Activated CD4-positive, alpha-beta memory T cell treated with anti-CD3 and anti-CD28 coated beads for 36 hours (primary cell): ENCODE measurements at regions of chr15 and their contacts with region 1.

Region 1: DNA sequence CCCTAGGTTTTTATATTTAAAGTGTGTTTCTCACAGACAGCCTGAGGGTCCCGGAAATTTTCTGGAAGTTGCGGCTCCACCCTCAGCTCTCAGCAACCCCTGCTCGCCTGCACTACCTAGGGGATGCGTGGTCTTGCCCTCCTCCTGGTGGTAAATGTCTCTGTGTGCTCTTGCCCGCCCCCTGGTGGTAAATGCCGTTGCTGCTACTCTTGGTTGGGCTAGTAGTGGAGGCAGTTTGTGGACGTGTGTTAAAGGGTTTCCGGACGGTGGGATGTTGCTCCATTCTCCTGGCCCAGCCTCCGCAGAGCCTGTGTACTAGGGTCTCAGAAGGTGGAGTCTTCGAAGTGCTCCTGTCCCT is 27.4 kb downstream of the STOML1 start:
- DNase-seq: peak; percentile 93
- H3K4me3 Mint-ChIP-seq: peak overlapping the region; percentile 69
- H3K27ac Mint-ChIP-seq: peak overlapping the region; percentile 85
- H3K4me1 Mint-ChIP-seq: peaks cover 27% of the 10 kb centered on the region
- H3K27me3 Mint-ChIP-seq: no peaks in the 10 kb centered on the region

Region 2: GRCh38 chr15:73897441-73898261 is 67.1 kb before region 1 on chr15:
- CTCF ChIA-PET with region 1: interaction called, 23 read pairs
- POLR2A ChIA-PET with region 1: no interaction called
- intact Hi-C with region 1: loop called (anchors 1 kb)
- DNase-seq: peak; percentile 82
- H3K4me3 Mint-ChIP-seq: no peak overlapping the region
- H3K27ac Mint-ChIP-seq: no peak overlapping the region
- H3K4me1 Mint-ChIP-seq: no peaks in the 10 kb centered on the region
- H3K27me3 Mint-ChIP-seq: no peaks in the 10 kb centered on the region

Region 3: GRCh38 chr15:73922186-73923151 is 42.2 kb before region 1 on chr15:
- CTCF ChIA-PET with region 1: interaction called, 22 read pairs
- POLR2A ChIA-PET with region 1: interaction called, 4 read pairs
- intact Hi-C with region 1: loop called (anchors 2 kb)
- DNase-seq: no peak
- H3K4me3 Mint-ChIP-seq: no peak overlapping the region
- H3K27ac Mint-ChIP-seq: peak overlapping the region; percentile 81
- H3K4me1 Mint-ChIP-seq: peaks cover 53% of the 10 kb centered on the region
- H3K27me3 Mint-ChIP-seq: no peaks in the 10 kb centered on the region

Region 4: GRCh38 chr15:73950831-73951561 is 13.7 kb before region 1 on chr15:
- CTCF ChIA-PET with region 1: interaction called, 19 read pairs
- POLR2A ChIA-PET with region 1: no interaction called
- intact Hi-C with region 1: loop called (anchors 1 kb)
- DNase-seq: peak; percentile 81
- H3K4me3 Mint-ChIP-seq: no peak overlapping the region
- H3K27ac Mint-ChIP-seq: peak overlapping the region; percentile 52
- H3K4me1 Mint-ChIP-seq: peaks cover 6% of the 10 kb centered on the region
- H3K27me3 Mint-ChIP-seq: no peaks in the 10 kb centered on the region

Region 5: DNA sequence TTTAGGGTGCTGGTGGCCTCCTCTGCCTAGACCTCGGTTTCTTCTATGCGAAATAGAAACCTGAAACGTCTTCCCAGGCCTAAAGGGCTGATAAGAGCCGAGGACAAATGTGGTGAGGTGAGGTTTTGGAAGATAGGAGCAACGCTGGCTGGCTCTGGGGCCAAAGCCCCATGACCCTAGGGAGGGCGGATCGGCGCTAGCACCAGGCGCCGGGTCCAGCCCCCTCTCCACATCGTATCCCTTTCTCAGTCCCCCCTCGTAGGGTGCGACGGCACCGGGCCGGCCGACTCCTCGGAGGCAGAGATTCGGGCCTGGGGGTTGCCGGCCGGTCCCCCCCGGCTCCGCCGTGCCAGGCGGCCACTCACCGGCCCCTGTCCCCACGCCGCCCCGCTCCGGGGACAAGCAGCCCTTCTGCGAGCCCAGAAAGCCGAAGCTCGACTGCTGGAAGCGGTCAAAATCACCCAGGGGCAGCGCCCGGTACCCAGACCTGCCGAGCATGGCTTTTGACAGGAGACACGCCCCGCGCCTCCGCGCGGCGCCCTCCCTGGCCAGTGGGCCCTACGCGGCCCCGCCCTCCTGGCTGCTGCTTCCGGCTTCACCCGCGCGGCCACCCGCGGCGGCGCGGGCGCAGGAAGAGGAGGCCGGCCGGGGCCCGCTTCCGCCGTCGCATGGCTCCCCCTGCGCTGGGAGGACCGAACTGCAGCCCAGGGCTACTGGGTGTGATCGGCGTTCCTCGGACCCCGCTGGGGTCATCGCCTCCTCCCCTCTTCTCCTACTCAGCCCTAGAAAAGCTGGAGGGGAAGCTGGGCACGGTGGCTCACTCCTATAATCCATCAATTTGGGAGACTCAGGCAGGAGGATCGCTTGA is 27.2 kb after region 1 on chr15 and contains the start of gene STOML1:
- CTCF ChIA-PET with region 1: interaction called, 12 read pairs
- POLR2A ChIA-PET with region 1: no interaction called
- intact Hi-C with region 1: no loop called
- DNase-seq: peak; percentile 97
- H3K4me3 Mint-ChIP-seq: peak within 1 kb of the TSS; percentile 80
- H3K27ac Mint-ChIP-seq: peak within 1 kb of the TSS; percentile 70
- H3K4me1 Mint-ChIP-seq: peaks cover 30% of the 10 kb centered on the region
- H3K27me3 Mint-ChIP-seq: no peaks in the 10 kb centered on the region
- total RNA-seq, gene STOML1: 7.1 to 10.1 TPM

Region 6: DNA sequence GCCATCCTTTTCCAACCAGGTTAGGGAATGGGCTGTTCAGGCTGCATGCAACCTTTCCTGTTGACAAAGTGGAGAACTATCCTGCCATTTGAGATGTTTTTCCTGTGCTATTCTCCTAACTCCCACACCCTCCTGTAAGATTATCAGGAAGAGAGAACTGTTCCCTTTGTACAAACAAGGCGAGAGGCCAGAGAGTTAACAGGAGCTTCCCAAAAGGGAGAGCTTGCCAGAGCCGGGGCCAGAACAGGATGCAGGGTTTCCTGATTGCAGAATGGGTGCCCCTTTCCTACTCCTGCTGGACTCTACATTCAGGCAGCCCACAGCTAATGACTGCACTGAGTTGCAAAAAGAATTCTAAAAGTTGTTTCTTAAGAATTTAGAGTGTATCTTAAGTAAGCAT is 46.9 kb after region 1 on chr15:
- CTCF ChIA-PET with region 1: interaction called, 18 read pairs
- POLR2A ChIA-PET with region 1: no interaction called
- intact Hi-C with region 1: loop called (anchors 5 kb)
- DNase-seq: no peak
- H3K4me3 Mint-ChIP-seq: no peak overlapping the region
- H3K27ac Mint-ChIP-seq: no peak overlapping the region
- H3K4me1 Mint-ChIP-seq: peaks cover 51% of the 10 kb centered on the region
- H3K27me3 Mint-ChIP-seq: no peaks in the 10 kb centered on the region

Region 7: GRCh38 chr15:74167891-74168331 is 203.2 kb after region 1 on chr15:
- CTCF ChIA-PET with region 1: no interaction called
- POLR2A ChIA-PET with region 1: no interaction called
- intact Hi-C with region 1: no loop called
- DNase-seq: no peak
- H3K4me3 Mint-ChIP-seq: no peak overlapping the region
- H3K27ac Mint-ChIP-seq: no peak overlapping the region
- H3K4me1 Mint-ChIP-seq: no peaks in the 10 kb centered on the region
- H3K27me3 Mint-ChIP-seq: peaks cover 8% of the 10 kb centered on the region